CD14-positive monocyte (primary cell): ENCODE measurements at regions of chr14 and their contacts with region 1.

Region 1: DNA sequence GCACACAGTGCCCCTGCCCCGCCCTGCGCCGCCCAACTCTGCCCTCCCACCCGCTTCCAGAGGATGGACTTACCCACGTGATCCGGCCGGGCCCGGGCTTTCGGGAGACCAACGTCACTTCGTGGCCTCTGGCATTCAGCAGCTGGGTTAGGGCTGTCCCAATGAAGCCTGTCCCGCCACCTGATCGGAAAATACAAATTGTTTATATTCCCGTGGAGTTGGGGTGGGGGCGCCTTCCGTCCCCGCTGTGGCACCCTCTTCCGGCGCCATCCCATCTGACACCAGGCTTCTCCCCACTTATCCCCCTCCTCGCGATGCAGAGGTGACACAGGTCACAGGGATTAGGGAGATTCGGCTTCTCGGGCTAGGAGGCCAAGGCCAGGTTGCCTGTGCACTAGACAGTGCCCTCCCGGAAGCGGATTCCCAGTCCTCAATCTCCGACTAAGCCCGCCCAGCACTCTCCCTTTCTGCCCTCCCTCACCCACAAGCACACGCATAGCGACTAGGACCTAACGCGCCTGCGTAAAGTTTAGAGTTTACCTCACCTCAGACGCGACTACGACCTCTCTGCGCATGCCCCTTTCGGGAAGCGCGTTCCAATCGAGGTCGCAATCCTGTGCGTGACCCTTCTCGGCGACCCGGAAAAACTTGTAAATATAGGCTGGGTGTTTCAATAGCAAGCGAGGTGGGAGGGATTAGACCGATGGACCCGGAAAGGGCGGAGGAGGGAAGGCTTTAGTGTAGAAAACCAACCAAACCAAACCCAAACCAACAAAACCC is at the start of gene SDR39U1:
- DNase-seq: peak; percentile 98 to 99 (median 99)
- H3K4me3 ChIP-seq: peak within 1 kb of the TSS; percentile 78 to 83 (median 82)
- H3K4me3 Mint-ChIP-seq: peak within 1 kb of the TSS; percentile 87 to 95
- H3K27ac ChIP-seq: peak within 1 kb of the TSS; percentile 95 to 99
- H3K27ac Mint-ChIP-seq: peak within 1 kb of the TSS; percentile 98 to 99 (median 98)
- H3K4me1 ChIP-seq: peaks cover 36 to 57% of the 10 kb centered on the region in 2 donors
- H3K4me1 Mint-ChIP-seq: peaks cover 49% of the 10 kb centered on the region
- H3K27me3 ChIP-seq: no peaks in the 10 kb centered on the region
- H3K27me3 Mint-ChIP-seq: peaks cover 0 to 3% (median 0%) of the 10 kb centered on the region in 3 donors
- CTCF ChIP-seq: no peak
- polyA plus RNA-seq, gene SDR39U1: 37.3 to 110 (median 39.2) TPM

Region 2: GRCh38 chr14:23006544-23007419 is 1435.7 kb before region 1 on chr14:
- intact Hi-C with region 1: loop called in 1 of 2 experiments (anchors 10 kb)
- DNase-seq: peak; percentile 96 to 97 (median 97)
- H3K4me3 ChIP-seq: peak overlapping the region; percentile 85 to 95 (median 89)
- H3K4me3 Mint-ChIP-seq: peak overlapping the region; percentile 99
- H3K27ac ChIP-seq: peak overlapping the region; percentile 85 to 96
- H3K27ac Mint-ChIP-seq: peak overlapping the region; percentile 92 to 98 (median 96)
- H3K4me1 ChIP-seq: peaks cover 30 to 40% of the 10 kb centered on the region in 2 donors
- H3K4me1 Mint-ChIP-seq: peaks cover 21% of the 10 kb centered on the region
- H3K27me3 ChIP-seq: no peaks in the 10 kb centered on the region
- H3K27me3 Mint-ChIP-seq: no peaks in the 10 kb centered on the region
- CTCF ChIP-seq: peak; percentile 29

Region 3: GRCh38 chr14:24332268-24332993 is 110.0 kb before region 1 on chr14:
- intact Hi-C with region 1: loop called in 1 of 2 experiments (anchors 2 kb)
- DNase-seq: peak; percentile 63 to 77 (median 67)
- H3K4me3 ChIP-seq: peak overlapping the region in 1 of 3 experiments; percentile 67
- H3K4me3 Mint-ChIP-seq: peak overlapping the region; percentile 74 to 88
- H3K27ac ChIP-seq: no peak overlapping the region
- H3K27ac Mint-ChIP-seq: peak overlapping the region in 6 of 7 donors; percentile 41 to 70 (median 64)
- H3K4me1 ChIP-seq: peaks cover 92 to 95% of the 10 kb centered on the region in 2 donors
- H3K4me1 Mint-ChIP-seq: peaks cover 89% of the 10 kb centered on the region
- H3K27me3 ChIP-seq: peaks cover 9 to 27% of the 10 kb centered on the region in 2 donors
- H3K27me3 Mint-ChIP-seq: peaks cover 23 to 42% (median 40%) of the 10 kb centered on the region in 3 donors
- CTCF ChIP-seq: peak; percentile 86

Region 4: DNA sequence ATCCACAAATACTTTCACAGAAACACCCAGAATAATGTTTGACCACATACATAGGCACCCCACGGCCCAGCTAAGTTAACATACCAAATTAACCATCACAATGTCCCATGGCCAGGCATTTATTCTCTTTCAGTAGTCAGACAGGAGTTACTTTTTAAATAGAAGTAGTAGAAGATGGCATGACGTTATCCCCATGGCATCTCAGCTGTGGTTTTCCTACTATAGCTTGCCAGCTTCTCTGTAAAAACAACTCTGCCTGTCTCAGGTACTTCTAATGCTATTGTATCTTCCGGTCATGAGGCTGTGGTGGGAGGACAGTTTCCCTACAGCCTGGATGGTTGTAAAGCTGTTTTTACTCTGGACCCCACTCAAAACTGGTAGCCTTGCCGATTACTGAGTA is 114.3 kb after region 1 on chr14:
- intact Hi-C with region 1: no loop called
- DNase-seq: no peak
- H3K4me3 ChIP-seq: no peak overlapping the region
- H3K4me3 Mint-ChIP-seq: no peak overlapping the region
- H3K27ac ChIP-seq: no peak overlapping the region
- H3K27ac Mint-ChIP-seq: no peak overlapping the region
- H3K4me1 ChIP-seq: no peaks in the 10 kb centered on the region
- H3K4me1 Mint-ChIP-seq: no peaks in the 10 kb centered on the region
- H3K27me3 ChIP-seq: no peaks in the 10 kb centered on the region
- H3K27me3 Mint-ChIP-seq: peaks cover 0 to 1% (median 0%) of the 10 kb centered on the region in 3 donors
- CTCF ChIP-seq: no peak